ENCODE measurements at regions of chr17 and their contacts with region 1.

Region 1: GRCh38 chr17:77096570-77097214 is 44.1 kb upstream of the SEC14L1 start:
- DNase-seq: peak; percentile 71
- ATAC-seq: peak; percentile 65
- H3K4me3 ChIP-seq: no peak overlapping the region
- H3K27ac ChIP-seq: no peak overlapping the region
- H3K4me1 ChIP-seq: no peaks in the 10 kb centered on the region
- H3K27me3 ChIP-seq: no peaks in the 10 kb centered on the region
- CTCF ChIP-seq: peak; percentile 86

Region 2: DNA sequence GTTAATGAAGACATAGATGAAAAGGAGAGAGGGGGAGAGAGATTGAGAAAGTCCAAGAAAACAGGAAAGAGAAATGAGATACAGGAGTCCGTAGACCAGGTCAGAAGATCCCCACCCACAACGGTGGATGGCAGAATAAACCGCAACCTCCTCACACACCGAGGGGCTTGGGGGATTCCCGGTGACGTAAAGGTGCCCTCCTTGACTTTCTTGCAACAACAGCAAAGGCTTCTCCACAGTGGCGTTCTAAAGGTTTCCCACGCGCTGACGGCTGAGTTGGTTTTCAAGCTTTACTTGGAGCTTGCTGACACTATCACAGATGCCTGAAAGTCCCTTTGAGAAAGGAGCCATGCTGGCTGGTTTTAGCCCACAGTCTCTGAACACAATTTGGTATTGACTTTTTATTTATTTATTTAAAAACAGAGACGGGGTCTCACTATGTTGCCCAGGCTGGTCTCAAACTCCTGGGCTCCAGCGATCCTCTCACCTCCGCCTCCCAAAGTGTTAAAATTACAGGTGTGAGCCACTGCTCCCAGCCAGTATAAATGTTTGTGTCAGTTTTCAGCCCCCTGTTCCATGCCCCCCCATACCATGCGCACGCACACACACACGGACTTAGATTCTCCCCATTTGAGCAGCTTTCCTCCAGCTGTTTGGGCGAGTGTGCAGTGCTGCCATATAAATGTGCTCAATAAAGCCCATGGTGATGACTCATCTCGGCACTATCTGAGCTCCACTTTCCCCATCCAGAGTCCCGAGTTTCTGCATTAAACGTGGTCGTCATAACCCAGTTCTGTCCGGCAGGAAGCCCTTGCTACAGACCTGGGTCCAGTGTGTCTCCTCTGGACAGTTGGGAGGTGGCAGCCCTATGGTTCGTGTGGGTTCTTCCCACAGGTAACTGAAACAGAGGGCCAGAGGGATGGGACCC is 11.1 kb after region 1 on chr17:
- CTCF ChIA-PET with region 1: no interaction called
- POLR2A ChIA-PET with region 1: no interaction called
- intact Hi-C with region 1: no loop called
- DNase-seq: no peak
- ATAC-seq: peak; percentile 30; the same call in 1 of the 2 replicates
- H3K4me3 ChIP-seq: no peak overlapping the region
- H3K27ac ChIP-seq: no peak overlapping the region
- H3K4me1 ChIP-seq: peaks cover 13% of the 10 kb centered on the region
- H3K27me3 ChIP-seq: no peaks in the 10 kb centered on the region
- CTCF ChIP-seq: no peak

Region 3: GRCh38 chr17:77145612-77146245 is 49.0 kb after region 1 on chr17:
- CTCF ChIA-PET with region 1: interaction called, 14 read pairs
- POLR2A ChIA-PET with region 1: interaction called, 6 read pairs
- intact Hi-C with region 1: loop called (anchors 1 kb)
- DNase-seq: peak; percentile 86
- ATAC-seq: peak; percentile 58
- H3K4me3 ChIP-seq: peak overlapping the region; percentile 27
- H3K27ac ChIP-seq: peak overlapping the region; percentile 71
- H3K4me1 ChIP-seq: peaks cover 40% of the 10 kb centered on the region
- H3K27me3 ChIP-seq: no peaks in the 10 kb centered on the region
- CTCF ChIP-seq: peak; percentile 38; the same call in 1 of the 2 replicates

Measured in PC-3 (cell line).